B cell (primary cell): ENCODE measurements at regions of chr4 and their contacts with region 1.

Region 1: DNA sequence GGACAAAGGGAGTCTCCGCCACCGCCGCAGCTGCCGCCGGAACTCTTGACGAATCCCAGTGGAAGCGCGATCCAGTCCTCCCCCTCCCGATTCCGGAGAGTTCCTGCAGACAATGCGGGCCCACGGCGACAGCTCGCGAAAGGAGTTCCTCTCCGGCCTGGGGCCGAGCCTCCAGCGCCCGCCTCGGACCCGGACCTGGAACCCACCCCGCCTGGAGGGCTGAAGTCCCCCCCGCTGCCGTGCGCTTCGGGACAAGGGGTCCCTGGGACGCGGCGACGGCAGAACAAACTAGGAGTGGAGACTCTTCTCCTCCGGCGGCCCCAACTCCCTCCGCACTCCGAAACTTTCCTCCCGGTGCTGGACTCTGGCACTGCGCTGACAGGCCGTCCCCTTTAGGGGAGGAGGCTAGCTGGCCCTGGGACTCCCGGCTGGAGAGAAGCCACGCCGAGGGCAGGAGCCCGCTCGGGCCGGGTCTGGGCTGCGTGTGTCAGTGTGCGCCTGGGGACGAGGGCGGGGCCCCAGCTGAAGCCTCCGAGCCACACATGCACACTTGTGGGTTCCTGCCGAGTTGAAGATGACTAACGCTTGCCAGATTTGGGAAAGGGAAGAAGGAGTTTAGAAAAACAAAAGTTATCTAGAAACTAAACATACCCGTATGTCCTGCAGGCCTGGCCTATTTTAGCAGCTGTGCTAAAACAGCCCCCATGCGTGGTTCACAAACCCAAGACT is at the start of gene ANTXR2:
- DNase-seq: peak; percentile 88
- ATAC-seq: peak; percentile 73
- H3K4me3 ChIP-seq: peak within 1 kb of the TSS; percentile 87 to 96 (median 88)
- H3K4me3 Mint-ChIP-seq: peak within 1 kb of the TSS; percentile 99
- H3K27ac ChIP-seq: peak within 1 kb of the TSS; percentile 91 to 97
- H3K27ac Mint-ChIP-seq: peak within 1 kb of the TSS; percentile 99
- H3K4me1 ChIP-seq: peaks cover 27% of the 10 kb centered on the region in 2 donors
- H3K4me1 Mint-ChIP-seq: peaks cover 52% of the 10 kb centered on the region
- H3K27me3 ChIP-seq: no peaks in the 10 kb centered on the region
- H3K27me3 Mint-ChIP-seq: no peaks in the 10 kb centered on the region
- CTCF ChIP-seq: no peak
- total RNA-seq, gene ANTXR2: 63.0 and 68.8 TPM in 2 replicates

Region 2: GRCh38 chr4:78938868-78939666 is 1133.8 kb before region 1 on chr4 and contains the start of gene PAQR3:
- CTCF ChIA-PET with region 1: no interaction called
- POLR2A ChIA-PET with region 1: no interaction called
- intact Hi-C with region 1: loop called (anchors 5 kb)
- DNase-seq: peak; percentile 91
- ATAC-seq: peak; percentile 98
- H3K4me3 ChIP-seq: peak within 1 kb of the TSS; percentile 74 to 88 (median 85)
- H3K4me3 Mint-ChIP-seq: peak within 1 kb of the TSS; percentile 91
- H3K27ac ChIP-seq: peak within 1 kb of the TSS; percentile 45 to 75
- H3K27ac Mint-ChIP-seq: peak within 1 kb of the TSS; percentile 79
- H3K4me1 ChIP-seq: peaks cover 12 to 20% of the 10 kb centered on the region in 2 donors
- H3K4me1 Mint-ChIP-seq: peaks cover 26% of the 10 kb centered on the region
- H3K27me3 ChIP-seq: no peaks in the 10 kb centered on the region
- H3K27me3 Mint-ChIP-seq: peaks cover 3% of the 10 kb centered on the region
- CTCF ChIP-seq: no peak
- total RNA-seq, gene PAQR3: 12.6 and 13.5 TPM in 2 replicates

Region 3: DNA sequence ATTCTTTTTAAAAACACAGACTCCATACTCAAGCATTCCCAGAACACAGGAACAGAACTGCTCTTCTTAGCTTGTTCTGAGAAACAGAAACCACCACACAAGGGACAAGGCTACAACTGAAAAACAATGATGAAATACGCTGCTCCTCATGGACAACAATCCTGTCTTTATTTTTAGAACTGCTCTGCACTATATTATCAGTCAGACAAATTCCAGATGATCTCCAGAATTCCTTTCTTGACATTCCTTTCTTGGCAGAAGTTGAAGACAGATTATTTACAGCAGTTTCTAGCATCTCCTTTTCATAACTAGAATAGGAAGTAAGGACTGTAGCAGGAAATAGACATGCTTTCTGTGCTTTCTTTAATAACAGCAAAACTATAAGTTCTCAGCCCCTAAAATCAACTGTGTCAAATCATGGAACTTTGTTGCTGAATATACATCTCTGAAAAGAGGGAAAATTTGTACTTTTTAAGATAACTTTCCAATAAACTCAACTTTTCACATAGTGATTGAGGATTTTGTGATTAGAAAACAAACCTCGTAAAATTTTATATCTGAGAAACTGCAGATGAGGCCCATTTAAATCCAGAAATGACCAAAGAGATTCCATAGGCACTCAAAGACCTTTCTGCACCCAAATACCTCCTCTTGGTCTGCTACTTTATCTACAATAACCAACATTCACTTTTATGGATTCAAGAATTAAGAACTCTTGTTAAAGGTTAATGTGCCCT is 35.8 kb before region 1 on chr4:
- CTCF ChIA-PET with region 1: no interaction called
- POLR2A ChIA-PET with region 1: no interaction called
- intact Hi-C with region 1: no loop called
- DNase-seq: no peak
- ATAC-seq: no peak
- H3K4me3 ChIP-seq: no peak overlapping the region
- H3K4me3 Mint-ChIP-seq: peak overlapping the region; percentile 14
- H3K27ac ChIP-seq: peak overlapping the region in 1 of 2 donors; percentile 54
- H3K27ac Mint-ChIP-seq: peak overlapping the region; percentile 37
- H3K4me1 ChIP-seq: peaks cover 0 to 16% of the 10 kb centered on the region in 2 donors
- H3K4me1 Mint-ChIP-seq: peaks cover 22% of the 10 kb centered on the region
- H3K27me3 ChIP-seq: no peaks in the 10 kb centered on the region
- H3K27me3 Mint-ChIP-seq: no peaks in the 10 kb centered on the region
- CTCF ChIP-seq: no peak

Region 4: DNA sequence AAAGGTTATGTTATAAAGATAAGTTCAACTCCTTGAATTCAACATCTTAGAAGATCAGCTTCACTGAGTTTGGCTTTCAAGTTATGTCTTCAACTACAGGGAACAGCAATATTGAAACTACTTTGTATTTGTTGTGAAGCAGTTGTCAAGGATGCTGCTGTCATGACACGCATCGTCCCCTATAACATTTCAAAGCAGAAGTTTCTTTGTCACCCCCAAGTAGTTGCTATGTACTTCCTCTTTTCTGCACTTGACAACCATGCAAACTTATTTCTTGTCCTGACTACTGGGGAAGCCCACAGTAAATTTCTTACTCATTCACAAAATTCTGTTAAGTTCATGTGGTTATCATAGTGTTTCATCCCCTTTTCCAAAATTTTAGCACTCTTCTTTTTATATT is 14.2 kb before region 1 on chr4:
- CTCF ChIA-PET with region 1: interaction called, 3 read pairs
- POLR2A ChIA-PET with region 1: interaction called, 8 read pairs
- intact Hi-C with region 1: loop called (anchors 1 kb)
- DNase-seq: peak; percentile 94
- ATAC-seq: peak; percentile 93
- H3K4me3 ChIP-seq: peak overlapping the region in 2 of 5 experiments; percentile 10 to 33
- H3K4me3 Mint-ChIP-seq: peak overlapping the region; percentile 79
- H3K27ac ChIP-seq: peak overlapping the region; percentile 91 to 100
- H3K27ac Mint-ChIP-seq: peak overlapping the region; percentile 98
- H3K4me1 ChIP-seq: peaks cover 14 to 17% of the 10 kb centered on the region in 2 donors
- H3K4me1 Mint-ChIP-seq: peaks cover 36% of the 10 kb centered on the region
- H3K27me3 ChIP-seq: no peaks in the 10 kb centered on the region
- H3K27me3 Mint-ChIP-seq: no peaks in the 10 kb centered on the region
- CTCF ChIP-seq: no peak

Region 5: GRCh38 chr4:80173401-80173800 is 100.5 kb after region 1 on chr4:
- CTCF ChIA-PET with region 1: interaction called, 3 read pairs
- POLR2A ChIA-PET with region 1: interaction called, 12 read pairs
- intact Hi-C with region 1: loop called (anchors 1 kb)
- DNase-seq: peak; percentile 82
- ATAC-seq: peak; percentile 93
- H3K4me3 ChIP-seq: peak overlapping the region in 1 of 5 experiments; percentile 47
- H3K4me3 Mint-ChIP-seq: peak overlapping the region; percentile 87
- H3K27ac ChIP-seq: peak overlapping the region; percentile 80 to 84
- H3K27ac Mint-ChIP-seq: peak overlapping the region; percentile 98
- H3K4me1 ChIP-seq: peaks cover 41 to 42% of the 10 kb centered on the region in 2 donors
- H3K4me1 Mint-ChIP-seq: peaks cover 60% of the 10 kb centered on the region
- H3K27me3 ChIP-seq: no peaks in the 10 kb centered on the region
- H3K27me3 Mint-ChIP-seq: no peaks in the 10 kb centered on the region
- CTCF ChIP-seq: no peak